GM13976 (cell line): ENCODE measurements at regions of chr14 and their contacts with region 1.

Region 1: DNA sequence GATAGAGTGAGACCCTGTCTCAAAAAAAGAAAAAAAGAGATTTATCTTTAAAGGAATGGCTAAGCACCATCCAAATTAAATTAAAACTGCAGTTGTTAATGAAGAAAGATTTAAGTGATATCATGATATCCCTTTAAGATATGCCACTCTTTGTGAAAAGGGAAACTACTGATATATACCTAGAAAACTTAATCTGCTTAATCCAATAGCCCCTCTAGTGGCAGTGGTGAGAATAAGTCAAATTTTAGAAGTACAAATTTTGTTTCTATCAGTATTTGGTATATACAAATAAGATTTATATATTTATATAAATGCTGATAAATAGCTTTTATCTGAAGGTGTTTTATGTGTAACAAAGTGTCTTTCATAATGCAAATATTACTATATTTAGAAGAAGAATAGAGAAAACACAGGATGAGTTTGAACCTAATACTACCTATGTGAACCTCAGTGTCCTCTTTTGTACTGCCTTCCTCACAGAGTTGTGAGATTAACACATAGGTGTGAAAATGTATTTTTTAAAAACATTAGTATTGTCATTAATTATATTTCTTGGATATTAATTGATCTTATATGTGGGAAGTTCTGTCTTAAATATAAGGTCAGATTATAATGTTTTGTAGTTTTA is 51.4 kb upstream of the GARIN2 start:
- DNase-seq: peak; percentile 22
- CTCF ChIP-seq: peak; percentile 17

Region 2: GRCh38 chr14:66495218-66496098 is 642.4 kb before region 1 on chr14:
- in situ Hi-C with region 1: loop called (anchors 25 kb)
- DNase-seq: peak; percentile 42
- CTCF ChIP-seq: peak; percentile 66

Region 3: DNA sequence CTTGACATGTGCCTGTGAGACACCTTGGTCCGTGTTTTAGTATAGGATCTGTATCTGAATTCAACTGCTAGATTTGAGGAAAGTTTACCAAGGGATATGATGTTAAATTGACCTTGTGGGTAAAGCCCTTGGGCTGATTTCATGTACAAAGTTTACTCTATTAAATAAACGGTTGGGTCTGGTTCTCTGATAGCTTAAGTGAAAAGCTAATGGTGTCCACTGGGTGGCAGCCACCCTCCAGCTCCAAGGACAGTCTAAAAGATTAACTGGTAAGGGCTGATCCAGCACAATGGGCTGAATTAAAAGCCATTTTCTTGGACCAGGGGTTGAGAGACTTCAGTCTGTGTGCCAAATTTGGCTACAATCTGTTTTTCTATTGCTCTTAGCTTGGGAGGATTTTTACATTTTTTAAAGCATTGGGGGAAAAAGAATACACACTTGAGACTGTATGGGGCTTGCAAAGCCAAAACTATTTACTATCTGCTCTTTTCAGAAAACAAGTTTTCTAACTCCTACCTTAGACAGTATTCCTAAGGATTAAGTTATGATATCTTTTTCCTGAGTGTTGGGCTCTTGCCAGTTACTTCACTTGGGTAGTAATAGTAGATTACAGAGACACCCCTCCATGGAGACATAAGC is 513.4 kb before region 1 on chr14:
- in situ Hi-C with region 1: loop called (anchors 10 kb)
- DNase-seq: peak; percentile 49
- CTCF ChIP-seq: peak; percentile 49